Right ventricle myocardium superior (tissue), 1 donor: ENCODE measurements at regions of chr2 and their contacts with region 1.

Region 1: DNA sequence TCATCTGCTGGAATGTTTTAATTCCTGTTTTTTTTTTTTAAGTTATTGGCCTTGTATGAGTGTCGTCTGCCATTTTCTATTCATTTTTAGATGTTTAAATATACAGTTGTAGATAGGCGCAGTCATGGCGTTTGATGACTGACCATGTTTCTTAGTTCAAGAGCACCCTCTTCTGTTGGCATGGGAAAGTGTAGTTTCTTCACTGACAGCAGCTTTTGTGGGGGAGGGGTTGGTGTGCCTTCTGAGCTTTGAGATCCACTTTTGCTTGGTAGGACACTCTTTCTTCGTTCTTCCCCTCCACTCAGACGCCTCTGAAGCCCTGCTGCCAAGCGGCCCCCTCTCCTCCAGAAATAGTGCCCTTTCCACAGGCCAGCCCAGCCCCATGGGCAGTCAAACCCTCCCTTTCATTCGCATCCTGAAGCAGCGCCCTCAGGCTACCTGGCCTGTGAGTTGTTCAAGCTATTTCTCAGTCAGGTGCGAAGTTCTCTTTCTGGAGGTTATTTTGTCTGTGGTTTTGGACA is 492.0 kb downstream of the TNS1 start:
- DNase-seq: peak; percentile 36
- ATAC-seq: peak; percentile 95

Region 2: GRCh38 chr2:216683846-216684507 is 826.9 kb before region 1 on chr2:
- intact Hi-C with region 1: loop called (anchors 5 kb)
- DNase-seq: peak; percentile 62
- ATAC-seq: peak; percentile 71